ENCODE measurements at regions of chr18 and their contacts with region 1.

Region 1: GRCh38 chr18:34707670-34708069 is 2.4 kb upstream of the DTNA start:
- DNase-seq: no peak

Region 2: DNA sequence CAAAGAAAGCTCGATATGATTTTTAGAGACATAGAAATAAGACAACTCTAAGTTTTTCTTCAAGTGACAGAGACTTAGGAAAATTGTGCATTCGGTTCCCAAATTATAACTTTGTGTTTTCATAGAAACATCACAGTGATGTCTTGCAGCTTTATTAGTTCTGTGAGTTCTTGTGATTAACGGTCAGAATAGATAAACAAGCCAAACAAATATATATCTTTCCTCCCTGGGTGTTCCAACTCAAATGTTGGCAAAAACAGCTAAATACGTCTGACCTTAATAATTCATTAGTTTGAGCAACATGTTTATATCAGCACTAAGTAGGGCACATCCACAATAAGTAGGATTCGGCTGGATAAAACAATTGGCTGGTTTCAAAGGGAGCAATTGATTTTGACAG is 50.0 kb after region 1 on chr18:
- intact Hi-C with region 1: loop called in 1 of 2 experiments (anchors 1 kb)
- DNase-seq: no peak

Region 3: GRCh38 chr18:35076135-35076924 is 368.7 kb after region 1 on chr18:
- intact Hi-C with region 1: loop called in 1 of 2 experiments (anchors 5 kb)
- DNase-seq: no peak

Region 4: DNA sequence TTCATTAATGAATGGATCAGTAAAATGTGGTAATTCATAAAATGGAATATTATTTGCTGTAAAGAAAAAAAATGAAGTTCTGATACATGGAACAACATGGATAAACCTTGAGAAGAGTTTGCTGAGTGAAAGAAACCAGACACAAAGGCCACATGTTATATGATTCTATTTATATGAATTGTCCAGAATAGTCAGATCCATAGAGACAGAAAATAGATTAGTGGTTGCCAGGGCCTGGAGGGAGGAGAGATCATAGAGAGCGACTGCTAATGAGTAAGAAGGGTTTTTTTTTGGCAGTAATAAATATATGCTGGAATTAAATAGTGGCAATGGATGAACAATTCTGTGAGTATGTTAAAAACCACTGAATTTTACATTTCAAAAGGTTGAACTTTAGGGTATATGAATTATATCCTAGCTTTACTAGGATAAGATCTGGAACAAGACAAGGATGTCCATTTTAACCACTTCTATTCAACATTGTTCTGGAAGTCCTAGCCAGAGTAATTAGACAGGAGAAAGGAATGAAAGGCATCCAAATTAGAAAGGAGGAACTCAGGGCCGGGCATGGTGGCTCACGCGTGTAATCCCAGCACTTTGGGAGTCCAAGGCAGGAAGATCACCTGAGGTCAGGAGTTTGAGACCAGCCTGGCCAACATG is 382.4 kb after region 1 on chr18:
- intact Hi-C with region 1: loop called in 1 of 2 experiments (anchors 5 kb)
- DNase-seq: no peak

Region 5: GRCh38 chr18:35386600-35387351 is 679.1 kb after region 1 on chr18:
- intact Hi-C with region 1: no loop called
- DNase-seq: peak; percentile 86

Measured in posterior vena cava (tissue), 2 donors.